CD4-positive, alpha-beta T cell (primary cell): ENCODE measurements at regions of chr11 and their contacts with region 1.

Region 1: GRCh38 chr11:47499614-47500013 is 50.7 kb upstream of the RAPSN start:
- DNase-seq: no peak
- ATAC-seq: no peak
- H3K4me3 ChIP-seq: no peak overlapping the region
- H3K4me3 Mint-ChIP-seq: no peak overlapping the region
- H3K27ac ChIP-seq: no peak overlapping the region
- H3K27ac Mint-ChIP-seq: peak overlapping the region; percentile 30
- H3K4me1 ChIP-seq: peaks cover 20% of the 10 kb centered on the region
- H3K4me1 Mint-ChIP-seq: peaks cover 37% of the 10 kb centered on the region
- H3K27me3 ChIP-seq: no peaks in the 10 kb centered on the region
- H3K27me3 Mint-ChIP-seq: no peaks in the 10 kb centered on the region
- CTCF ChIP-seq: no peak

Region 2: GRCh38 chr11:47538741-47539574 is 39.3 kb after region 1 on chr11:
- CTCF ChIA-PET with region 1: interaction called, 3 read pairs
- POLR2A ChIA-PET with region 1: no interaction called
- intact Hi-C with region 1: loop called in 1 of 2 experiments (anchors 10 kb)
- DNase-seq: no peak
- ATAC-seq: no peak
- H3K4me3 ChIP-seq: no peak overlapping the region
- H3K4me3 Mint-ChIP-seq: peak overlapping the region; percentile 23
- H3K27ac ChIP-seq: no peak overlapping the region
- H3K27ac Mint-ChIP-seq: peak overlapping the region; percentile 77
- H3K4me1 ChIP-seq: peaks cover 56% of the 10 kb centered on the region
- H3K4me1 Mint-ChIP-seq: peaks cover 70% of the 10 kb centered on the region
- H3K27me3 ChIP-seq: no peaks in the 10 kb centered on the region
- H3K27me3 Mint-ChIP-seq: no peaks in the 10 kb centered on the region
- CTCF ChIP-seq: no peak